ENCODE measurements at regions of chr11 and their contacts with region 1.

Region 1: DNA sequence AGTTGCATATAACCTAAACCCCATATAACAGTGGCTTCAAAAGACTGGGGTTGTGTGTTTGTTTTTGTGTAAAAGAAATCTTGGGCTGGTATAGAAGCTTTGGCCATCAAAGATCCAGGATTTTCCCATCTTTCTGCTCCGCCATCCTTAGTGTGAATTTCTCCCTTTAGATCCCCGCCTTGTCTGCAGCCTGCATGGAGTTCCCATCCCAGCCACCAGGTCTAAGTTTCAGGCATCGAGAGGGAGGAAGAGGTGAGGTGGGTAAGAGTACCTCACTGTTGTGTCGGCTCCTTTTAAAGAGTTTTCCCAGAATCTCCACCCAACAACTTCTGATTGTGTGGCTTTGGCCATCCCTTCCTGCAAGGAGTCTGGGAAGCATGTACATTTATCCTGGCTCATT is 195.5 kb upstream of the SORL1-AS1 start:
- DNase-seq: no peak
- H3K4me3 ChIP-seq: no peak overlapping the region
- H3K27ac ChIP-seq: no peak overlapping the region
- H3K4me1 ChIP-seq: no peaks in the 10 kb centered on the region
- H3K27me3 ChIP-seq: no peaks in the 10 kb centered on the region
- CTCF ChIP-seq: no peak
- POLR2A ChIP-seq: no peak

Region 2: GRCh38 chr11:122101625-122102291 is 453.5 kb after region 1 on chr11:
- intact Hi-C with region 1: loop called in 1 of 2 experiments (anchors 5 kb)
- DNase-seq: peak; percentile 53 to 91 (median 69)
- H3K4me3 ChIP-seq: peak overlapping the region in 2 of 4 donors; percentile 20 to 47
- H3K27ac ChIP-seq: peak overlapping the region; percentile 7 to 89 (median 72)
- H3K4me1 ChIP-seq: peaks cover 0 to 8% of the 10 kb centered on the region in 2 donors
- H3K27me3 ChIP-seq: no peaks in the 10 kb centered on the region
- CTCF ChIP-seq: peak; percentile 20 to 71 (median 57)
- POLR2A ChIP-seq: peak in 1 of 2 donors; percentile 32